Activated CD4-positive, alpha-beta T cell treated with anti-CD3 and anti-CD28 coated beads, Interleukin-2, amount 10 ng/mL, durations not matched to agents 24 days and 14 days (primary cell): ENCODE measurements at regions of chr16 and their contacts with region 1.

Region 1: GRCh38 chr16:85935974-85936760 is 37.2 kb downstream of the IRF8 start:
- DNase-seq: peak; percentile 90
- H3K4me3 Mint-ChIP-seq: peak overlapping the region; percentile 60
- H3K27ac Mint-ChIP-seq: peak overlapping the region; percentile 98
- H3K4me1 Mint-ChIP-seq: peaks cover 60% of the 10 kb centered on the region
- H3K27me3 Mint-ChIP-seq: peaks cover 3% of the 10 kb centered on the region

Region 2: DNA sequence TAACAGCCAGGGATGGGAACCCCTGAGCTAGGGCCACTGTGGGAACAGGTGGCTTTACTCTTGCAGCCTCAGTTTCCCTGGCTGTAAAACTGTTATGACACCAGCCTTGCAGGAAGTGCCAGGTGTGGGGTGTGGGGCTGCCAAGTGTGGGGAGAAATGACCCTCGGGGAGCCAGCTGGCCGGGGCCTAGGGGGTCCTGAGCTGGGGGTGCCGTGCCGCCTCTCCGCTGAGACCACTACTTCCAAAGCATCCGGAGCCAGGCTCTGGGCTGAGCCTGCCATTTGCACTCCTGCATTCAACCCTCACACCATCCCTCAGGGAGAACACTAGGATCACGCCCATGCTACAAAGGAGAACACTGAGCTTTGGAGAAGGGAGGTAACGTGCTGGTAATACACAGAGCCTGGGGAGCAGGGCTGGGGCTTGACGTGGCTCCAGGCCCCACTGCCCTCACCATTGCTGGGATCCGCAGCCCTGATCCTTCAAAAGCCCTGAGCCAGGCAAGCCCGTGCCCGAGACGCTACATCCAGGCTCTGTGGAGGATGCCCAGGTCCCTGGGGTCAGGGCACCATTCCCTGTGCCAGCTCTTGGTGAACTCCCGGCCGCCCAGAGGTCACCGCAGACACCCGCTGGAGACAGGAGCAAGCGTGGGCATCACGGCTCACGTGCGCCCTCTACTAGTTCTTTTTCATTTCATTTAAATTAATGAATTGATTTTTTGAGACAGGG is 218.6 kb before region 1 on chr16:
- intact Hi-C with region 1: no loop called
- DNase-seq: peak; percentile 88
- H3K4me3 Mint-ChIP-seq: no peak overlapping the region
- H3K27ac Mint-ChIP-seq: no peak overlapping the region
- H3K4me1 Mint-ChIP-seq: peaks cover 3% of the 10 kb centered on the region
- H3K27me3 Mint-ChIP-seq: peaks cover 16% of the 10 kb centered on the region

Region 3: DNA sequence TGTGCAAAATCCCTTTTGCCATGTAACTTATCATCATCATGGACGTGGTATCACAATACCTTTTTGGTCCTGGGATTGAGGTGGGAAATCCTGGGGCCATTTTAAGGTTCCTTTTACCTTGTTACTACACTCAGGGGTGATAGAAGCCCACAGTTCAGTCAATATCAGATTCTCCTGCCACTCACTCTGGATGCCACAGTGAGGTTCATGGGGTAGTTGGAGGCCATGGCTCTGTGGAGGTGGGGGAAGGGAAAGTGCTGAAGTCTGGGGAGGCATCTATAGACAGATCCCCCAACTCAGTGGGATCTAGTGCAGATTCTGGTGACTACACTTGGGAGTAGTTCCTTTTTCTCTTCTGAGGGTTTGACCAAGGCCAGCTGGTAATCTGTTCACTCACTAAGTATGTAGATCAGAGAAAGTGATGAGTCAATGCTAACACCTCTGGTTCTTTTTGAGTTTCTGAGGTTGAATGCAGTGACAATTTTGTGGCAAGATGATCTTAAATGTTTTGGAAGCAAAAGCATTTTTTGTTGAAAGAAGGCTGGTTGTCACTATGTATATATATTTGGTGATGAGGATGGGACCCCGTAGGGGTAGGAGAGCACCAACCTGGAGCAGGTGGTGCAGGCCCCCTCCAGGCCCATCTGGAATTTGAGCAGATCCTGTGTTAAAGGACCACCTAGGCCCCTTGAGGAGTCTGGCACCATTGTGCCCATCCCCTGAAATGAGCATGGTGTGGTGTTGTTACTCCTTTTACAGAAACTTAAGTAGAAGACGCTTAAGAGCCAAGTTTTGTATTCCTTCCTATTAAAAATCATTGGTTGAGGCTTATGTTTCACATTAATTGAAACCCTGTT is 56.0 kb before region 1 on chr16:
- intact Hi-C with region 1: loop called (anchors 1 kb)
- DNase-seq: no peak
- H3K4me3 Mint-ChIP-seq: peak overlapping the region; percentile 4
- H3K27ac Mint-ChIP-seq: peak overlapping the region; percentile 63
- H3K4me1 Mint-ChIP-seq: peaks cover 33% of the 10 kb centered on the region
- H3K27me3 Mint-ChIP-seq: peaks cover 61% of the 10 kb centered on the region

Region 4: GRCh38 chr16:85888405-85889331 is 47.5 kb before region 1 on chr16:
- intact Hi-C with region 1: loop called (anchors 1 kb)
- DNase-seq: peak; percentile 70
- H3K4me3 Mint-ChIP-seq: peak overlapping the region; percentile 52
- H3K27ac Mint-ChIP-seq: peak overlapping the region; percentile 82
- H3K4me1 Mint-ChIP-seq: peaks cover 38% of the 10 kb centered on the region
- H3K27me3 Mint-ChIP-seq: peaks cover 32% of the 10 kb centered on the region

Region 5: GRCh38 chr16:85923153-85924021 is 12.8 kb before region 1 on chr16:
- intact Hi-C with region 1: loop called (anchors 1 kb)
- DNase-seq: no peak
- H3K4me3 Mint-ChIP-seq: no peak overlapping the region
- H3K27ac Mint-ChIP-seq: peak overlapping the region; percentile 92
- H3K4me1 Mint-ChIP-seq: peaks cover 32% of the 10 kb centered on the region
- H3K27me3 Mint-ChIP-seq: no peaks in the 10 kb centered on the region

Region 6: GRCh38 chr16:85947230-85948137 is 11.3 kb after region 1 on chr16:
- intact Hi-C with region 1: loop called (anchors 1 kb)
- DNase-seq: peak; percentile 76
- H3K4me3 Mint-ChIP-seq: peak overlapping the region; percentile 73
- H3K27ac Mint-ChIP-seq: peak overlapping the region; percentile 62
- H3K4me1 Mint-ChIP-seq: peaks cover 56% of the 10 kb centered on the region
- H3K27me3 Mint-ChIP-seq: peaks cover 3% of the 10 kb centered on the region

Region 7: GRCh38 chr16:85969159-85969558 is 33.0 kb after region 1 on chr16:
- intact Hi-C with region 1: loop called (anchors 1 kb)
- DNase-seq: no peak
- H3K4me3 Mint-ChIP-seq: peak overlapping the region; percentile 56
- H3K27ac Mint-ChIP-seq: peak overlapping the region; percentile 73
- H3K4me1 Mint-ChIP-seq: peaks cover 25% of the 10 kb centered on the region
- H3K27me3 Mint-ChIP-seq: no peaks in the 10 kb centered on the region